Tibial artery (tissue), 4 donors: ENCODE measurements at regions of chr1 and their contacts with region 1.

Region 1: GRCh38 chr1:36703526-36704208 is 221.0 kb upstream of the CSF3R start:
- DNase-seq: peak; percentile 49 to 72
- H3K4me3 ChIP-seq: no peak overlapping the region
- H3K27ac ChIP-seq: no peak overlapping the region
- H3K4me1 ChIP-seq: peaks cover 0 to 4% (median 2%) of the 10 kb centered on the region in 4 donors
- H3K27me3 ChIP-seq: peaks cover 0 to 55% of the 10 kb centered on the region in 2 donors
- CTCF ChIP-seq: peak; percentile 53 to 61

Region 2: DNA sequence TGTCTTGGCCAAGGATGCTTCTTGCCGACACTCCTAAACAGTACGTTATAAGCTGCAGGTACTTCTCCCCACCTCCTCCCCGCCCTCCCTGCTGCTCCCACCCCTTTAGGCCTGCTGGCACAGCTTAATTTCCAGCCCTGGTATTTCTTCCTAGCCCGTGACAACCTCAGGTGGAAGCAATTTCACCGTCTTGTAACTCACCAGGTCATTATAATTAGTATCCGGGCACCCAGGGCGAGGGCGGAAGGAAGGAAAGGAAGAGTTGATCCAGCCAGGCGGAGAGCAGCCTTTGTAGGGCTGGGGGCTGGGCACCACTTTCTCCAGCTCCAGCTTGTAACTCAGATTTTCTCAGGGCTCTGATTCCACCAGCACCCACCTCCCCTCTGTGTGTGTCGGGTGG is 67.5 kb before region 1 on chr1:
- intact Hi-C with region 1: loop called (anchors 1 kb)
- DNase-seq: no peak
- H3K4me3 ChIP-seq: no peak overlapping the region
- H3K27ac ChIP-seq: no peak overlapping the region
- H3K4me1 ChIP-seq: peaks cover 0 to 14% (median 0%) of the 10 kb centered on the region in 4 donors
- H3K27me3 ChIP-seq: peaks cover 0 to 12% of the 10 kb centered on the region in 2 donors
- CTCF ChIP-seq: no peak

Region 3: GRCh38 chr1:36737767-36738166 is 34.1 kb after region 1 on chr1:
- intact Hi-C with region 1: no loop called
- DNase-seq: peak in 1 of 2 donors; percentile 16
- H3K4me3 ChIP-seq: no peak overlapping the region
- H3K27ac ChIP-seq: no peak overlapping the region
- H3K4me1 ChIP-seq: no peaks in the 10 kb centered on the region
- H3K27me3 ChIP-seq: peaks cover 0 to 43% of the 10 kb centered on the region in 2 donors
- CTCF ChIP-seq: no peak